ENCODE measurements at regions of chr10 and their contacts with region 1.

Region 1: DNA sequence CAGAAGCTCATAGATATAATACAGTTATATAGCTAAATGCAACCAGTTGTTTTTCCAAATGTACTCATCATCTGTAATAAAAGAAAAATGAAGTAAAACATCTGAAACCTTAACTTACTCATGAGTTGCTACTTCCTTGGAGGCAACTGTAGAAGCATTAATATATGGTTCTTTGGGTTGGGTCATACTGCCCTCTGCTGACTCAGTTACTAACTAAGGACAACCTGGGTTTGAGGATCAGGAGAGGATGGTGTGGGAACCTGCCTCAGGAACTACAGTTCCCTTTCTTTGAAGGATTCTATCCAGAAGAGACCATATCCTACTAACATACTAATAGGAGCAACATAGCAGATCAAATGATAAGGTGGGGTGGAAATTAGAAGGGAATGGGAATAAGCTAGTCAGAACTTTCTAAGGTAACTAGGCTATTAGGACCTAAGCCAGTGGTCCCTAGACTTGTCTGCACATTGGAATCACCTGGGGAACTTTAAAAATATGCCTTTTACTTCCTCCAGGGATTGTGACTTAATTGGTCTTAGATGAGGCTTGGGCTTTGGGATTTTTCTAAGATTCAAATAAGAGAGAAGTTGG is 20.7 kb downstream of the COX15 start:
- DNase-seq: no peak
- H3K4me3 ChIP-seq: no peak overlapping the region
- CTCF ChIP-seq: peak; percentile 50

Region 2: DNA sequence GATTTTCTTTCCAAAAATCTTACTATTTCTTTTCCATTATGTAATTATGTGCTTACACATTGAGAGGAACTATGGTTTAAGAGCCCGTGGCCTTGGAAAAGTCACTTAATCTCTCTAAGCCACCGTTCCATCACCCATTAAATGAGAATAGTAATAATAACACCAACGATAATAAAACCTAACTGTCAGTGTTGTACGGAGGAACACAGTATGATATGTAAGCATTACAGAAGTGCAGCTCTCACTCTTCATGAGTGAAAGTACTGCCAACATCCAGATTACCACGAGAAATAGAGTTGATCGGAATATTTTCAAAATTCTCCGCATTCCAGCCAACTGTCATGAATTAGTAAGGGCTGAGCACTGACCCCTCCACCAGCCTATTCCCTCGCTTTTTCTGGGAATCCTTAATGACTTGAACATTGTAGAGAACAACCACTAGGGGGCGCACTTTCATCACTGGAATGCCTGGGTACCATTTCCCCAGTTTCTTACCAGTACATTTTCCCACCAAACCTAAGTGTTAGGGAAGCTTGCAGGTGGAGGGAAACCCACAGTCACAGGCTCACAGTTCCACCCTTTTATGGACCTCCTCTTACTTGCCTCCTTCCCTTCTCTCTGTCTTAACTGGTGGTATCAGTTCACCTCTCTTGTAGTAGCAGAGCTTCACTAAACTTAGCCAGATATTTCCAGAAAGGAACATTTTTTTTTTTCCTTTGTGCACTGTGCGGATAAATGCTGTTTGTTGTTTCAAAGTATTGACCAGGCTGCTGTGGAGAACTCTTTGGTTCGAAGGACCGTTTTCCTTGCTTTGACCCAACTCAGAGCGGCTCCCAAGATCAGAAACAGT is 150.7 kb before region 1 on chr10:
- CTCF ChIA-PET with region 1: interaction called, 54 read pairs
- POLR2A ChIA-PET with region 1: no interaction called
- DNase-seq: no peak
- H3K4me3 ChIP-seq: no peak overlapping the region
- CTCF ChIP-seq: peak; percentile 56

Region 3: GRCh38 chr10:99620713-99621453 is 90.3 kb before region 1 on chr10:
- CTCF ChIA-PET with region 1: interaction called, 126 read pairs
- POLR2A ChIA-PET with region 1: no interaction called
- DNase-seq: peak; percentile 61
- H3K4me3 ChIP-seq: peak overlapping the region; percentile 67
- CTCF ChIP-seq: no peak

Region 4: GRCh38 chr10:99659031-99659867 is 52.0 kb before region 1 on chr10 and contains the start of gene ENTPD7:
- CTCF ChIA-PET with region 1: interaction called, 20 read pairs
- POLR2A ChIA-PET with region 1: no interaction called
- DNase-seq: peak; percentile 74
- H3K4me3 ChIP-seq: peak within 1 kb of the TSS; percentile 91
- CTCF ChIP-seq: peak; percentile 38

Region 5: GRCh38 chr10:99732033-99732912 is 21.0 kb after region 1 on chr10 and contains the starts of genes COX15 and CUTC:
- CTCF ChIA-PET with region 1: interaction called, 18 read pairs
- POLR2A ChIA-PET with region 1: no interaction called
- DNase-seq: peak; percentile 63
- H3K4me3 ChIP-seq: peak within 1 kb of the TSS; percentile 74
- CTCF ChIP-seq: peak; percentile 37

Region 6: GRCh38 chr10:99834410-99834809 is 123.2 kb after region 1 on chr10:
- CTCF ChIA-PET with region 1: no interaction called
- POLR2A ChIA-PET with region 1: no interaction called
- DNase-seq: peak; percentile 49
- H3K4me3 ChIP-seq: no peak overlapping the region
- CTCF ChIP-seq: no peak

Region 7: GRCh38 chr10:99917963-99918825 is 207.0 kb after region 1 on chr10:
- CTCF ChIA-PET with region 1: no interaction called
- POLR2A ChIA-PET with region 1: no interaction called
- DNase-seq: no peak
- H3K4me3 ChIP-seq: peak overlapping the region; percentile 27
- CTCF ChIP-seq: no peak